Activated CD4-positive, alpha-beta memory T cell treated with anti-CD3 and anti-CD28 coated beads for 36 hours (primary cell): ENCODE measurements at regions of chr2 and their contacts with region 1.

Region 1: DNA sequence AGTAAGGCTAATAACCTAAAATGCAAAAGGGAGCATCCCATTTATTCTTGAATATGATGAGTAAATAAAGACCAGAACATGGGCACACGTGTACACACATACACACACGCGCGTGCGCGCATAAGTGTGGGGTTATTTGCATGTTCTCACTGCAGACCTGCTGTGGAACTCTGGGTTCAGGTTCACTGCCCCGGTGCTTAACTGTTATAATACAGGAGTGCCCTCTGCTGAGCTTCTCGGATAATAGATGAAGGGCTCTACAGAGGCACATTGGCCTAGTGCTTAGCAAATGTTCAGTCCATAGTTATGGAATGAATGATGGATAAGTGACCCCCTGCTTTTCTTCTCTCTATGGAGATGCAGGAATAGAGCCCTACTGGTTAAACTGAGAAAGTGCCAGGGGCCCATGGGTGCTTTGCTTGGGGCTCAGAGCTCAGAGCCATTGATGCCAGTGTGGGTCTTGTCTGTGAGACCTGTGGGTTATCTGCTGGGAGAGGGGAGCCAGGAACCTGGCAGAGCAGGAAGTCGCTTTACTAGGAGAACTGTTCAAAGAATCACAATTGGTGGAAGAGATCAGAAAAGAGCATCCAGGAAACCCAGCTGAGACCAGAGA is 3.6 kb upstream of the ARL4C start:
- DNase-seq: peak; percentile 84
- H3K4me3 Mint-ChIP-seq: no peak overlapping the region
- H3K27ac Mint-ChIP-seq: peak overlapping the region; percentile 15
- H3K4me1 Mint-ChIP-seq: peaks cover 26% of the 10 kb centered on the region
- H3K27me3 Mint-ChIP-seq: no peaks in the 10 kb centered on the region

Region 2: DNA sequence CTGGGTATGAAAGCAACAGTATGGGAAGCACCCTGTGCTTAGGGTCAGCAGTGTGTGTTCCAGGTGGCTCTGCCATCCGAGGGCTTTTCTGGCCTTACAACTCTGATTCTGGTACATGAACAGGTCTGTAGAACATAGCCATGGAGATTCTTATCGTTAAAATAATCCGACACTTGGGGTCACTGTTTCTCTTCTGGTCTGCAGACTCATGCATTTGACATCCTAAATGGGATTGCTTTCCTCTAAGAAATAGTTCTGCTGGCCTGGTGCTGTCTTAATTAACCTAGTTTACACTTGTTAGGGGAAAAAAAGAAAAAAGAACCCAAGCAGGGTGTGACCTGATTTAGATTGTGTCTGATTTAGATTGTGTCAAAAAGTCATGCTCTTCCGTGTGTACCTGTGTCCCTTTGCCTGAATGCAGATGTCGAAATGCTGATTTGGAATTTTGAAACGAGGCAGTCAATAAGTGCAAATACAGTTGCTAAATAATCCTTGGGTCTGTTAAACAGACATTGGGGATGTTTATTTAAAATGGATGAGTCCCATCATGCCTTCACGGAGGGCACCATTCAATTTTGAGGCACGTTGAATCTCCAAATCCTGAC is 523.7 kb before region 1 on chr2:
- CTCF ChIA-PET with region 1: interaction called, 3 read pairs
- POLR2A ChIA-PET with region 1: no interaction called
- intact Hi-C with region 1: loop called (anchors 1 kb)
- DNase-seq: no peak
- H3K4me3 Mint-ChIP-seq: no peak overlapping the region
- H3K27ac Mint-ChIP-seq: no peak overlapping the region
- H3K4me1 Mint-ChIP-seq: peaks cover 37% of the 10 kb centered on the region
- H3K27me3 Mint-ChIP-seq: no peaks in the 10 kb centered on the region

Region 3: GRCh38 chr2:234425619-234426603 is 74.6 kb before region 1 on chr2:
- CTCF ChIA-PET with region 1: interaction called, 4 read pairs
- POLR2A ChIA-PET with region 1: interaction called, 15 read pairs
- intact Hi-C with region 1: no loop called
- DNase-seq: peak; percentile 78
- H3K4me3 Mint-ChIP-seq: peak overlapping the region; percentile 73
- H3K27ac Mint-ChIP-seq: peak overlapping the region; percentile 81
- H3K4me1 Mint-ChIP-seq: peaks cover 79% of the 10 kb centered on the region
- H3K27me3 Mint-ChIP-seq: no peaks in the 10 kb centered on the region

Region 4: DNA sequence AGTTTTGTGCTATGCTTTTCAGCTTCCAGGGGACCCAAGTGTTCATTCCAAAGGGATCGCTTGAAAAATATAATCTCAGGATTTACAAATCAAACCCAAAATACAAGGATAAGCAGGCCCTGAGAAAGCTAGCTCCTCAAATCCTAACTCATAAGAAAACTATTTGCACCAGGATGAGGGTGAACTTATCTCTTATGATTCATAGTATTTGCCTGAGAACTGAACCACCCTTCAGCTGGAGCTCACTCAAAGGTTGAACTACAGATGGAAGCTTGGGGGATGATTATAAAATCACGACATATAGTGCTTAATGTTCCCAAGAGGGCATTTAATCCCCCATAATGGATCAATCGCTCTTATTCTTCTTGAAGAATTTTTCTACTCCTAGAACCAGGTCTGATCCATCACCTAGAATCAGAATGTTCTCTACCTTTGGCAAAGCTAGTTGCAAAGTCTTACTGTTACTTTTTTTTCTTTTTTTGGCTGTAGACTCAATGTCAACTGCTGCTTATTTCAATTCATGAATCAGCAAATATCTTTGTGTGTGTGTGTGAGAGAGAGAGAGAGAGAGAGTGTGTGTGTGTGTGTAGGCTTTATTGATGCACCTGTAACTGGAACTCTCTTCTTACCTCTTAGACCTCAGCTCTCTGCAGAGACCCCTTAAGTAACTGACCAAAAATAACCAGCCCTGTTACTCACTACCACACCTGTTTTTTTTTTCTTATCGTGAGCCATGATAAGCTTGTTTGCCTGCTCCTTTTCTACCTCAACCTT is 48.5 kb before region 1 on chr2:
- CTCF ChIA-PET with region 1: interaction called, 6 read pairs
- POLR2A ChIA-PET with region 1: interaction called, 17 read pairs
- intact Hi-C with region 1: no loop called
- DNase-seq: no peak
- H3K4me3 Mint-ChIP-seq: peak overlapping the region; percentile 72
- H3K27ac Mint-ChIP-seq: peak overlapping the region; percentile 88
- H3K4me1 Mint-ChIP-seq: peaks cover 78% of the 10 kb centered on the region
- H3K27me3 Mint-ChIP-seq: no peaks in the 10 kb centered on the region

Region 5: DNA sequence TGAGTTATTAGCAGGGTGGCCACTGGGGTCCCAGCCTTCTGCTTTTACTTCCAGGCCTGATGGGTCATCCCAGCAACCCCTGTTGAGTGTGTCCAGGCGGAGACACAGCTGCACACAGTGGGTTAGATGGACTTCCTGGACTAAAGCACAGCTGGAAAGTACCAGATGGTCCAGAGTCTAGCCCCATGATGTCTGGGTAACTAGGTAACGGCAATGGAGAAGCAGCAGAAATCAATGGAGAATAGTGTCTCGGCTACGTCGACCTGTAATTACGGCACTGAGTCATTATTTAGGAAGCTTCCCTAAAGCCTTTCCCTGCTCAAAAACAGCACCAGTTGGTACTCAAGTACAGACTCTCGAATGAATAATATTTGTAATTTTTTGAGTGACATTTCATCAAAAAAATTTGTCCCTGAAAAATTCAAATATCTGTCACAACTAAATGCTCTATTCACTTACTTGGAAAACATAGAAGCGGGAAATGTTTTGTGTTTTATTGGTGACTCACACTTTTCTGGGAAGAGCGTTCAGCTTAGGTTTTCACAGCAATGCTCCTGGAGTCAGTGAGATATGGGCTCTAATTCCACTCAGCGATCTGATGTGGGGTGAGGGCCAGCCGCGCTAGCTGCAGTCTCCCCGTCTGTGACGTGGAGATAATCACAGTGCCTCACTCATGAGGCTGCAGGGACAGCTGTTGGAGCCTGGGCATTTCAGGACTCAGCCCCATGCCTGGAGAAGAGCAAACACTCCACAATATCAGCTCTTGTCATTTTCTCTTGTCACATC is 12.6 kb after region 1 on chr2:
- CTCF ChIA-PET with region 1: interaction called, 11 read pairs
- POLR2A ChIA-PET with region 1: no interaction called
- intact Hi-C with region 1: no loop called
- DNase-seq: no peak
- H3K4me3 Mint-ChIP-seq: no peak overlapping the region
- H3K27ac Mint-ChIP-seq: no peak overlapping the region
- H3K4me1 Mint-ChIP-seq: peaks cover 3% of the 10 kb centered on the region
- H3K27me3 Mint-ChIP-seq: no peaks in the 10 kb centered on the region

Region 6: DNA sequence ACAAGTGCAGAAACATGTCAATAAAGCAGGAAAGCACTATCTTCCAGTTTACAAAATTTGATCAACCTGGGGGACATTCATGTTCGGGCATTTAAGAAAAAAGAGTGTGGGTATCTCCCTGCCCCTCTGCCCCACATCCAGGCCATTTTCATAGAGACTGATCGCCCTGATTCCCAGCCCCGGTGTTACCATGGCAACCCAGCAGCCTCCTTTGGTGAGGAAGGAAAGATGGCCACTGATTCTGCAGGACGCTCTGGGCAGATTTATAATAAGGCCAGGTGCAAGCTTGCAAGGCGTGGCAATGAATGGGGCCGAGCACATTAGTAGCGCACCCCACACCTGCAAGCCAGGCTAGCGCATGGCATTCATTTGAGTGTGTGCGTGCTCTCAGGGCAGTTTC is 33.1 kb after region 1 on chr2:
- CTCF ChIA-PET with region 1: no interaction called
- POLR2A ChIA-PET with region 1: no interaction called
- intact Hi-C with region 1: no loop called
- DNase-seq: no peak
- H3K4me3 Mint-ChIP-seq: no peak overlapping the region
- H3K27ac Mint-ChIP-seq: no peak overlapping the region
- H3K4me1 Mint-ChIP-seq: no peaks in the 10 kb centered on the region
- H3K27me3 Mint-ChIP-seq: peaks cover 18% of the 10 kb centered on the region